ENCODE measurements at regions of chr20 and their contacts with region 1.

Region 1: DNA sequence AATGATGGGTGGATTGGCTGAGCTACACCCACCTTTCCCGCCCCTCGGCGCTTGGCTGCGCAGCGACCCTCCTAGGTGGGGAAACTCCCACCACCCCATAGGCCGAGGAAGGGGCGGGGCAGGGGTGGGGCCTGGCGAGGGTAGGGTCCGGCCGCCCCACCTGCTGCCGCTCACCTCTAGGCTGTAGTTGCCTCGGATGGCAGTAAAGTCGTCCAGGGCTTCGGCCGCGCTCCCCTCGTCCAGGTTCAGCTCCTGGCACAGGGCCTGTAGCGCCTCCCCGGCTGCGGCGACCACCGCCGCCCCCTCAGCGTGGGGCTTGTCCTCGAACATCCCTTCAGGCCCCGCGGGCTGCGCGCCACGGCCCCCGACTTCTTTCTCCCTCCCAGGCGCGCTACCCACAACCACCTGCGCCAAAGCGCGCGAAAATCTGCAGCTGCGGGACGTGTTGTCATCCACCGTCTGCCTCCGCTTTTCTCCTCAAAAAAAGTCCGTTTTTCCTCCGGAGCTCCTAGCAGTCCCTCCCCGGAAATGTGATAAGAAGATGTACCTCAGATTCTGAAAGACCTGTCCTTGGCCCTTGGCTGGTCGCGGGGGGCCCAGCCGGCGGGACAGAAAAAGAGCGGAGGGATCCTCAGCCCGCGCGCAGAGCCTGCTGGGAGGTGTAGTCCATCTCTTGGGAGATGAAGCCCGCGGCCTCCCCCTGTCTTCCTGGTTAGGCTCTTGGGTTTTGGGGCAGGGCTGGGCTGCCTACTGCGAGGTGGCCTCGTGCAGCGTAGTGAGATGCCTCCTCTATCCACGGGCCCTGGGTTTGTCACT is at the start of gene RBL1:
- H3K4me3 ChIP-seq: peak within 1 kb of the TSS; percentile 74
- H3K27ac ChIP-seq: peak within 1 kb of the TSS; percentile 93
- H3K4me1 ChIP-seq: peaks cover 2% of the 10 kb centered on the region
- CTCF ChIP-seq: peak; percentile 48; the same call in 1 of the 2 replicates

Region 2: GRCh38 chr20:36709126-36709525 is 386.7 kb before region 1 on chr20:
- CTCF ChIA-PET with region 1: no interaction called
- POLR2A ChIA-PET with region 1: no interaction called
- H3K4me3 ChIP-seq: no peak overlapping the region
- H3K27ac ChIP-seq: no peak overlapping the region
- H3K4me1 ChIP-seq: no peaks in the 10 kb centered on the region
- CTCF ChIP-seq: no peak

Region 3: GRCh38 chr20:37081717-37082289 is 14.0 kb before region 1 on chr20:
- CTCF ChIA-PET with region 1: interaction called, 3 read pairs
- POLR2A ChIA-PET with region 1: interaction called, 19 read pairs
- H3K4me3 ChIP-seq: no peak overlapping the region
- H3K27ac ChIP-seq: no peak overlapping the region
- H3K4me1 ChIP-seq: no peaks in the 10 kb centered on the region
- CTCF ChIP-seq: no peak

Region 4: DNA sequence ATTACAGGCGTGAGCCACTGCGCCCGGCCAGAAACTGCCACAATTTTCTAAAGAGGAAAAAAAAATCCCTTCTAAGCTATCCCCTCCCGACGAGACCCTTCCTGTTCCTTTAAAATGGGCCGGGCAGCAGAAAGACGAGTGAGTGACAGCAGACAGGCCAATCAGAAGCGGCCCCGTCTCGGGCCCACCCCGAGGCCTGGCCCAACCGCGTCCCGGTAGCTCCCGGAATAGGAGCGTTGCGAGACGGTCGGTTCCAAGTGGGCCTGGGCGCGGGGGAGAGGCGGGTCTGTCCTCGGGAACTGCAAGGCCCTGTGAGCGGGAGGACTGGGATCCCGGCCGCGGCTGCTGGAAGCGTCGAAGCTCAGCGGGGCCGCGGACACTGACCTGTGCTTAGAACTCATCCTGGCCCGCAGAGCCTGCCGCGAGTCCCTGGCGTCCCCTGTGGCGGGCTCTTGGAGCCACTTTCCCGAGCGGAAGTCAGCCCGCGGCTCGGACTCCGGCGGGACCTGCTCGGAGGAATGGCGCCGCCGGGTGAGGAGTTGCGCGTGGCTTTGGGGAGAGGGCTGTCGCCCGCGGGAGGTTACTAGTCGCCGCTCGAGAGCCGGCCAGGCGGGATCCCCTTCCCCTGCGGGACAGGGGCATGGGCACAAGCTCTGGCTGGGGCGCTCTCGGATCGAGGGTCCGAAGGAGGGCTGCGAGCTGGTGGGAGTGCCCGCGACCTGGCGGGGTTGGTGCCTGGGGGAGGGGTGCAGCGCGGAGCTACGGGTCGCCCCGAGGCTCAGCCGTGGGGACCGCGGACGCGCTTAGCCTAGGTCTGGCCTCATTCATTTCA is 83.2 kb after region 1 on chr20 and contains the starts of genes MROH8 and RPN2:
- CTCF ChIA-PET with region 1: no interaction called
- POLR2A ChIA-PET with region 1: interaction called, 30 read pairs
- H3K4me3 ChIP-seq: peak within 1 kb of the TSS; percentile 71
- H3K27ac ChIP-seq: peak within 1 kb of the TSS; percentile 79
- H3K4me1 ChIP-seq: no peaks in the 10 kb centered on the region
- CTCF ChIP-seq: no peak